H1 (cell line): ENCODE measurements at regions of chr3 and their contacts with region 1.

Region 1: GRCh38 chr3:163785693-163786092 is 1292.6 kb downstream of the SI start:
- DNase-seq: peak in 1 of 2 experiments; percentile 70
- H3K4me3 ChIP-seq: no peak overlapping the region
- H3K27ac ChIP-seq: no peak overlapping the region
- H3K4me1 ChIP-seq: no peaks in the 10 kb centered on the region
- H3K27me3 ChIP-seq: no peaks in the 10 kb centered on the region
- CTCF ChIP-seq: peak; percentile 21 to 76 (median 73)
- EP300 ChIP-seq: no peak
- POLR2A ChIP-seq: no peak
- RAD21 ChIP-seq: peak; percentile 75 to 85

Region 2: DNA sequence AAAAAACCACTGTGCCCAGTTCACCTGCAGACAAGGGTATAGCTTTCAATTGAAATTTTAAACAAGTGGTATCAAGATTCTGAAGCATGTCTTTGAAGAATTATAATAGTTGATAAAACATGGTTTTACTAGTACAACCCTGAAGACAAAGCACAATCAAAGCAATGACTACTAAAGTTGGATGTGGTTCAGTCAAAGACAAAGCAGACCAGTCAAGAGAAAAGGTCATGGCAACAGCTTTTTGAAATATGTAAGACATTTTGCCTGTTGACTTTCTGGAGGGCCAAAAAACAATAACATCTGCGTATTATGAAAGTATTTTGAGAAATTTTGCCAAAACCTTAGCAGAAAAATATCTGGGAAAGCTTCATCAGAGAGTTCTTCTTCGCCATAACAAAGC is 101.0 kb before region 1 on chr3:
- CTCF ChIA-PET with region 1: no interaction called
- POLR2A ChIA-PET with region 1: no interaction called
- DNase-seq: no peak
- H3K4me3 ChIP-seq: no peak overlapping the region
- H3K27ac ChIP-seq: no peak overlapping the region
- H3K4me1 ChIP-seq: no peaks in the 10 kb centered on the region
- H3K27me3 ChIP-seq: no peaks in the 10 kb centered on the region
- CTCF ChIP-seq: no peak
- EP300 ChIP-seq: no peak
- POLR2A ChIP-seq: no peak
- RAD21 ChIP-seq: no peak

Region 3: GRCh38 chr3:163924600-163924999 is 138.9 kb after region 1 on chr3:
- CTCF ChIA-PET with region 1: no interaction called
- POLR2A ChIA-PET with region 1: no interaction called
- DNase-seq: no peak
- H3K4me3 ChIP-seq: no peak overlapping the region
- H3K27ac ChIP-seq: no peak overlapping the region
- H3K4me1 ChIP-seq: peaks cover 0 to 4% (median 2%) of the 10 kb centered on the region in 4 experiments; a peak in 2 of 7 replicates
- H3K27me3 ChIP-seq: no peaks in the 10 kb centered on the region
- CTCF ChIP-seq: no peak
- EP300 ChIP-seq: no peak
- POLR2A ChIP-seq: no peak
- RAD21 ChIP-seq: no peak

Region 4: GRCh38 chr3:163951397-163951987 is 165.8 kb after region 1 on chr3:
- CTCF ChIA-PET with region 1: interaction called, 10 read pairs
- POLR2A ChIA-PET with region 1: no interaction called
- DNase-seq: no peak
- H3K4me3 ChIP-seq: no peak overlapping the region
- H3K27ac ChIP-seq: no peak overlapping the region
- H3K4me1 ChIP-seq: no peaks in the 10 kb centered on the region
- H3K27me3 ChIP-seq: no peaks in the 10 kb centered on the region
- CTCF ChIP-seq: peak in 2 of 3 experiments; percentile 17 to 23; a peak in 2 of 4 replicates
- EP300 ChIP-seq: no peak
- POLR2A ChIP-seq: no peak
- RAD21 ChIP-seq: peak; percentile 31 to 37; a peak in 3 of 4 replicates